KBM-7 (cell line): ENCODE measurements at regions of chr10 and their contacts with region 1.

Region 1: DNA sequence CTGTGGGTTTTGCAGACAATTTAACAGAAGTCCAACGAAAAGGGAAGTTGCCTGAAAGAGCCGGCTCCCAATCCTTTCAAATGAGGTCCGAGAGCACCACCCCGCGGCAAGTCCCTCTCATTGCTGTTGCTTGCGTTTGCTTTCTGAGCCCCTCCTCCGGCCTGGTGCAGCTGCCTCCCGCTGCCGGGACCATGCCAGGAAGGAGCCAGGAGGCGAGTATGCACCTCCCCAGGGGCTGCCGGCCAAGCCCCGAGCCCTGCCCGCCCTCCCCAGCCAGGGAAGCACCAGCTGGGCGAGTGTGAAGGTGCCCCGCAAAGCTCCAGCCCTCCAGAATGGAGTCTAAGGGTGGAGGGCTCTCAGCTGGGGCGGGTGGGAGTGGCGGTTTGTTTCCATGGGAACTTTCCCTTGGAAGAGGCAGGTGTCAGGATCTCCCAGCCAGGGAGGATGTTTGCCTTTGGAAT is 25.8 kb upstream of the PPP2R2D start:
- DNase-seq: peak; percentile 90

Region 2: GRCh38 chr10:130190055-130190736 is 1684.8 kb before region 1 on chr10:
- in situ Hi-C with region 1: loop called (anchors 25 kb)
- DNase-seq: peak; percentile 84

Region 3: DNA sequence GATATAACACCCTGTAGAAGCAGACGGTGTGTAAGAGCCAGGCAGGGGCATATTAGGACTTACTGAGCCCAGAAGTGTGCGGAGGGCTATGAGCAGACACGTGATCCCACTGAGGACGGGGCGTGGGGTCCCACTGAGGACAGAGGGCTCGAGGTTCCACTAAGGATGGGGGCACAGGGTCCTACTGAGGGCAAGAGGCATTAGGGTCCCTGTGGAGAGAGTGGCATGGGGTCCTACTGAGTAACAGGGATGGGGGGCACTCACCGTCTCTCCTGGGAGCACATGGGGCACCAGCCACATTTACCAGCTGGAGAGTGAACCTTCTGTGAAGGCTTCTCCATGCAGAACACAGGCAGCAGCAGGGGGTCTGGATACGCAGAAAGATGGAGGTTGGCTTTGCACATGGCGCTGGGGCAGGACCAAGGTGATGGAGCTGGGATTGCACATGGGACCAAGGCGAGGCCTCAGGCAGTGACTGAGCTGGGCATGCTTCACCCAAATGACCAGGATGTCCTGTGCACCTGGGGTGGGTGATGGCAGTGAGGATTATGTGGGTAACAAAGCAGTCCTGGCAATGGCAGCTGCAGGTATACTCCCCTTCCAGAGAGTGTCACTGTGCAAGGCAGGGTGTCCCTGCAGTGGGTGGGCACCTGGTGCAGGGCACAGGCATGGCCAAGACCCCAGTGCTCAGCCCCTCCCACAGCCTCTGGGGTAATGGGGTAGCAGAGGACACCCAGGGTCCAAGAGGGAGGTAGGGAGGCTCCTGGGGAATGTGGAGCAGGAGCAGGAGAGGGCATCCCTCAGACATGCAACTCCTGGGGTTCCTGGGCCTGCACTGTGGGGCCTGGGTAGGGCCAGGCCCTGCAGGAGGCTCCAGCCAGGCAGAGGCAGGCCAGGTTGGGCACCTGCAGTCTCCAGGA is 841.6 kb before region 1 on chr10:
- in situ Hi-C with region 1: no loop called
- DNase-seq: no peak

Region 4: DNA sequence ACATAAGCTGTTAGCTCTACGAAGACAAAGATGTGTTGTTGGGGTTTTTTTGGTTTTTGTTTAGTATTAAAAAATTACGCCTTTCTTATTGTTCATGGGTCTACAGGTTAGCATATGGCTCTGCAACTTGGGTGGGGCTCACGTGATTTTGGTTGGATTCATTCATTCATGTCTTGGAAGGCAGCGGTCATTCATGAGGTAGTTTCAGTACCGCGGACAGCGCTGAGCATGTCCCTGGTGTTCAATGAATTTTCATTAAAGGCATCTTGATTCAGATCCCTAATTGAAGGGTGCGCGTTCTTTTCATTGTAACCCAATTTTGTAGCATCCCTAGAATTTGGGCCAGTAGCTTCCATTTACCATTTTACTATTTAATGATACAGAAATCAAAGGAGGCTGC is 520.6 kb before region 1 on chr10:
- in situ Hi-C with region 1: no loop called
- DNase-seq: peak; percentile 3

Region 5: DNA sequence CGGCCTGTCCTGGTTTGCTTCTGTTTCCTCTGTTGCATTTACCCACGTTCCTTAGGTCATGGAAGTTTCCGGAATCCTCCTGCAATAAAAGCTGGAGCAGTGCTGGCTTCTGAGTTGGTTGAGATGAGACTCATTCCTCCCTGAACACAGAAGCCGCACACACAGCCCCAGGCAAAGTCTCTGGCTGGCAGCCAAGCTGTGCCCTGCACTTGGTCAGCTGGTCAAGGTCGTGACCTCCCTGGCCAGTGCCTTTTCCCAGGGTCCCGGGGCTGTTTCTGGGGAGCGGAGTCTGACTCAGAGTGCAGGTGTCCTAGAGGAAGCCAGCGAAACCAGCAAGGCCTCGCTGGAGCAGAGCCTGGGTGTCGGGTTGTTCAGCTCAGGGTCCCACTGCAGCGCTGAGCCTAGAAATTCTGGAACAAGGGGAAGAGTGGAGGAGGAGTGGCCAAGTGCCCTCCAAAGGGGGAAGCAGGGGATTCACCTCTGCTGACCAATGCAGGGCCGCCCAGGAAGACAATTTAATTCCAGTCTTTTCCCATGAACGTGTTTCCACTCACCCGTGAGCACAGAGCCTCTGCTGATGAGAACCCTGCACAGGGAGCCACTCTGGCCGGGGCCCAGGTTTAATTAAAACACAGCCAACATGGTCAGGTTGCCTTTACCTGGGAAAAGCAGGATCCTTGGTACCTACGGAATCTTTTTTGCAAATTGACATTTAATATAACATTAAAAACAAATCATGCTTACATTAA is 219.7 kb before region 1 on chr10:
- in situ Hi-C with region 1: no loop called
- DNase-seq: no peak